Dorsolateral prefrontal cortex (tissue), 120 donors: ENCODE measurements at regions of chr9 and their contacts with region 1.

Region 1: GRCh38 chr9:73565833-73566465 is 414.3 kb downstream of the ANXA1 start:
- DNase-seq: peak; percentile 6 to 70 (median 55)
- H3K4me3 ChIP-seq: no peak overlapping the region
- H3K27ac ChIP-seq: no peak overlapping the region
- H3K27me3 ChIP-seq: no peaks in the 10 kb centered on the region
- CTCF ChIP-seq: peak; percentile 35 to 97 (median 75)

Region 2: DNA sequence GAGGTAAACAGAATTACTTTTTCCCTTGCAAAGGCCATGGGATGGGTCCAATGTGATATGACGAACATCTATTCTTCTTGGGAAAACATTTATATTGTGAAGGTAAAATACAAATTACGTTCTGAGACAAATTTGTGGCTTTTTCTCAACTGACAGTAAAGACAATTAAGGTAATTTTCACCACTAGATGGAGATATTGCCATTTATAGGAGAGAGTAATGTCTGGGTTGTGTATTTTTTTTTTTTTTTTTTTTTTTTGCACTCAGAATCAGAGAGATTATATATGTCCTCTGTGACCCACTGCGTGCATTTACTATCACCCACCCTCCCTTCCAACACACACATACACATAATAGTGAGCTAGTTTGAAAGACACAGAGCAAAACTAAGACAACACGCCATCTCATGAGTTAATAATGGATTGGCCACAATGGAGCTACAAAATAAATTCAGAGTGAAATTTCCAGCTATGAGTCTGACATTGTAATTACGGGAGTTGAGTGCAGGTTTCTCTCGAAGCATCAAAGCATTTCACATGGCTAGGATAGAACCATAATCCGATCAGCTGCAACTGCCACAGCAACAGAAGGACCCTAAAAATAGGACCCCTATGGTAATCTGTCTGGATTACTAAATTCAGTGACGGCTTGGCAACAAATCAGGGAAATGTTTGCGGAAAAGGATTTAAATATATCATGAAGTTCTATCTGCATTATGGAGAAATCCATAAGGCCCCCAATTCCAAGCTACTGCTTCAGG is 365.1 kb before region 1 on chr9:
- intact Hi-C with region 1: loop called (anchors 2 to 10 kb)
- DNase-seq: no peak
- H3K4me3 ChIP-seq: peak overlapping the region in 31 of 59 donors; percentile 1 to 44 (median 23)
- H3K27ac ChIP-seq: peak overlapping the region in 11 of 59 donors; percentile 1 to 60 (median 21)
- H3K27me3 ChIP-seq: peaks cover 0 to 4% (median 0%) of the 10 kb centered on the region in 45 donors
- CTCF ChIP-seq: peak; percentile 42 to 87 (median 72)

Region 3: GRCh38 chr9:73269430-73270101 is 296.4 kb before region 1 on chr9:
- intact Hi-C with region 1: loop called in 1 of 2 experiments (anchors 5 kb)
- DNase-seq: no peak
- H3K4me3 ChIP-seq: peak overlapping the region in 1 of 59 donors; percentile 13
- H3K27ac ChIP-seq: peak overlapping the region in 1 of 59 donors; percentile 10
- H3K27me3 ChIP-seq: peaks cover 0 to 5% (median 0%) of the 10 kb centered on the region in 45 donors
- CTCF ChIP-seq: peak in 50 of 56 donors; percentile 7 to 59 (median 40)

Region 4: GRCh38 chr9:73426269-73426668 is 139.7 kb before region 1 on chr9:
- intact Hi-C with region 1: loop called in 1 of 2 experiments (anchors 10 kb)
- DNase-seq: peak in 1 of 10 donors; percentile 17
- H3K4me3 ChIP-seq: no peak overlapping the region
- H3K27ac ChIP-seq: no peak overlapping the region
- H3K27me3 ChIP-seq: peaks cover 0 to 54% (median 0%) of the 10 kb centered on the region in 45 donors
- CTCF ChIP-seq: no peak

Region 5: GRCh38 chr9:73689051-73689870 is 123.3 kb after region 1 on chr9:
- intact Hi-C with region 1: loop called in 1 of 2 experiments (anchors 5 kb)
- DNase-seq: peak in 1 of 10 donors; percentile 12
- H3K4me3 ChIP-seq: peak overlapping the region in 18 of 59 donors; percentile 1 to 37 (median 12)
- H3K27ac ChIP-seq: peak overlapping the region in 48 of 59 donors; percentile 0 to 83 (median 62)
- H3K27me3 ChIP-seq: no peaks in the 10 kb centered on the region
- CTCF ChIP-seq: no peak